Dendritic cell treated with granulocyte-macrophage colony-stimulating factor and Interleukin-4, amounts not matched to agents 40 ng/mL and 50 ng/mL, for 4 days (primary cell): ENCODE measurements at regions of chr6 and their contacts with region 1.

Region 1: GRCh38 chr6:122461885-122462284 is 9.7 kb downstream of the SERINC1 start:
- H3K4me3 Mint-ChIP-seq: no peak overlapping the region
- H3K27ac Mint-ChIP-seq: no peak overlapping the region
- H3K4me1 Mint-ChIP-seq: peaks cover 59% of the 10 kb centered on the region
- H3K27me3 Mint-ChIP-seq: no peaks in the 10 kb centered on the region

Region 2: GRCh38 chr6:122428781-122429180 is 33.1 kb before region 1 on chr6:
- intact Hi-C with region 1: loop called (anchors 5 kb)
- H3K4me3 Mint-ChIP-seq: no peak overlapping the region
- H3K27ac Mint-ChIP-seq: no peak overlapping the region
- H3K4me1 Mint-ChIP-seq: peaks cover 14% of the 10 kb centered on the region
- H3K27me3 Mint-ChIP-seq: no peaks in the 10 kb centered on the region

Region 3: GRCh38 chr6:122683989-122684651 is 222.2 kb after region 1 on chr6:
- intact Hi-C with region 1: no loop called
- H3K4me3 Mint-ChIP-seq: no peak overlapping the region
- H3K27ac Mint-ChIP-seq: no peak overlapping the region
- H3K4me1 Mint-ChIP-seq: no peaks in the 10 kb centered on the region
- H3K27me3 Mint-ChIP-seq: peaks cover 11% of the 10 kb centered on the region

Region 4: GRCh38 chr6:123215211-123215610 is 753.3 kb after region 1 on chr6:
- intact Hi-C with region 1: no loop called
- H3K4me3 Mint-ChIP-seq: no peak overlapping the region
- H3K27ac Mint-ChIP-seq: no peak overlapping the region
- H3K4me1 Mint-ChIP-seq: no peaks in the 10 kb centered on the region
- H3K27me3 Mint-ChIP-seq: no peaks in the 10 kb centered on the region